ENCODE measurements at regions of chr17 and their contacts with region 1.

Region 1: GRCh38 chr17:65455972-65456343 is 105.5 kb downstream of the AXIN2 start:
- DNase-seq: peak in 1 of 3 donors; percentile 58
- ATAC-seq: peak; percentile 79 to 96 (median 88)
- H3K4me3 ChIP-seq: no peak overlapping the region
- H3K27ac ChIP-seq: no peak overlapping the region
- H3K4me1 ChIP-seq: peaks cover 0 to 3% (median 0%) of the 10 kb centered on the region in 4 donors
- H3K27me3 ChIP-seq: no peaks in the 10 kb centered on the region
- CTCF ChIP-seq: peak; percentile 39 to 60 (median 42)
- POLR2A ChIP-seq: no peak

Region 2: GRCh38 chr17:65556014-65556909 is 100.3 kb after region 1 on chr17:
- intact Hi-C with region 1: loop called in 1 of 2 experiments (anchors 5 kb)
- DNase-seq: peak; percentile 82 to 86 (median 82)
- ATAC-seq: peak; percentile 52 to 55 (median 52)
- H3K4me3 ChIP-seq: no peak overlapping the region
- H3K27ac ChIP-seq: no peak overlapping the region
- H3K4me1 ChIP-seq: peaks cover 0 to 7% (median 0%) of the 10 kb centered on the region in 4 donors
- H3K27me3 ChIP-seq: no peaks in the 10 kb centered on the region
- CTCF ChIP-seq: peak; percentile 69 to 88 (median 78)
- POLR2A ChIP-seq: no peak

Measured in right lobe of liver (tissue), 6 donors.